CD14-positive monocyte (primary cell): ENCODE measurements at regions of chr1 and their contacts with region 1.

Region 1: DNA sequence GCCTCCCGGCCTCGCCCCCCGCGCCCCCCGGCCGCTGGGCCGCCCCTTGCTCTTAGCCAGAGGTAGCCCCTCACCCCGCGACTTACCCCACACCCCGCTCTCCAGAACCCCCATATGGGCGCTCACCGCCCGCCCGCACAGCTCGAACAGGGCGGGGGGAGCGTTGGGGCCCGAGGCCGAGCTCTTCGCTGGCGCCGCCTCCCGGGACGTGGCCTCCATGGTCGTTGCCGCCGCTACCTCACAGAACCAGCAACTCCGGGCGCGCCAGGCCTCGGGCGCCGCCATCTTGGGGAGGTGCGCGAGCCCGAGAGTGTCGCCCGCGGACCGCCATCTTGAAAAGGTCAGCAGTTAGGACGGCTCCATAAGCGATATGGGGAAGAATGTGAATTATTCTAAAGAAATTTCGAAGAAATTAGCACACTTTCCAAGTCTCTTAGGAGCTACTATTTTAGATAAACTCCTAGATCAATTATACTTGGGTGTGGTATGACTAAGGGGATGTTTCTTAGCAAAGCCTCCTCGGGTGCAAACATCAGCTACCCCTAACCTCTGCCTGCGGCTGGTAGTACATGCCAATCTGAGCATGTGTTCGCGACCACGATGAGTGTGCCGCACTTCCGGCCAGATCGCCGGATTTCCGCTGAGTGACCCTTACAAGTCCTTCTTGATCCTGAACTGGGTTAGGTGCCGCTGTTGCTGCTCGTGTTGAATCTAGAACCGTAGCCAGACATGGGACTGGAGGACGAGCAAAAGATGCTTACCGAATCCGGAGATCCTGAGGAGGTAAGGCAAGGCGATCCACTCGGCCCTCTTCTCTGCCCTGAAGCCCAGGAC is at the starts of genes LRRC41 and UQCRH:
- DNase-seq: peak; percentile 94 to 95 (median 95)
- H3K4me3 ChIP-seq: peak within 1 kb of the TSS; percentile 97 to 99 (median 99)
- H3K4me3 Mint-ChIP-seq: peak within 1 kb of the TSS; percentile 97 to 99
- H3K27ac ChIP-seq: peak within 1 kb of the TSS; percentile 88 to 94
- H3K27ac Mint-ChIP-seq: peak within 1 kb of the TSS; percentile 94 to 99 (median 95)
- H3K4me1 ChIP-seq: peaks cover 38 to 53% of the 10 kb centered on the region in 2 donors
- H3K4me1 Mint-ChIP-seq: peaks cover 50% of the 10 kb centered on the region
- H3K27me3 ChIP-seq: no peaks in the 10 kb centered on the region
- H3K27me3 Mint-ChIP-seq: peaks cover 0 to 2% (median 0%) of the 10 kb centered on the region in 3 donors
- CTCF ChIP-seq: no peak
- polyA plus RNA-seq, gene LRRC41: 22.9 to 50.9 (median 47.4) TPM
- polyA plus RNA-seq, gene UQCRH: 261 to 341 (median 266) TPM

Region 2: GRCh38 chr1:46223472-46223943 is 79.7 kb before region 1 on chr1:
- intact Hi-C with region 1: no loop called
- DNase-seq: peak; percentile 53 to 73 (median 65)
- H3K4me3 ChIP-seq: no peak overlapping the region
- H3K4me3 Mint-ChIP-seq: no peak overlapping the region
- H3K27ac ChIP-seq: no peak overlapping the region
- H3K27ac Mint-ChIP-seq: peak overlapping the region in 1 of 7 donors; percentile 41
- H3K4me1 ChIP-seq: no peaks in the 10 kb centered on the region
- H3K4me1 Mint-ChIP-seq: peaks cover 2% of the 10 kb centered on the region
- H3K27me3 ChIP-seq: no peaks in the 10 kb centered on the region
- H3K27me3 Mint-ChIP-seq: peaks cover 0 to 3% (median 1%) of the 10 kb centered on the region in 3 donors
- CTCF ChIP-seq: peak; percentile 84

Region 3: GRCh38 chr1:46340404-46341221 is 37.4 kb after region 1 on chr1 and contains the start of gene NSUN4:
- intact Hi-C with region 1: loop called (anchors 1 to 5 kb)
- DNase-seq: peak; percentile 95 to 98 (median 97)
- H3K4me3 ChIP-seq: peak within 1 kb of the TSS; percentile 53 to 94 (median 61)
- H3K4me3 Mint-ChIP-seq: peak within 1 kb of the TSS; percentile 100
- H3K27ac ChIP-seq: peak within 1 kb of the TSS; percentile 96 to 97
- H3K27ac Mint-ChIP-seq: peak within 1 kb of the TSS; percentile 99 to 100 (median 100)
- H3K4me1 ChIP-seq: peaks cover 19 to 24% of the 10 kb centered on the region in 2 donors
- H3K4me1 Mint-ChIP-seq: peaks cover 27% of the 10 kb centered on the region
- H3K27me3 ChIP-seq: no peaks in the 10 kb centered on the region
- H3K27me3 Mint-ChIP-seq: peaks cover 0 to 1% (median 0%) of the 10 kb centered on the region in 3 donors
- CTCF ChIP-seq: peak; percentile 73
- polyA plus RNA-seq, gene NSUN4: 8.5 to 12.8 (median 10.4) TPM